Activated T-helper 1 cell treated with anti-CD3 and anti-CD28 coated beads, Interleukin-12 subunit alpha, Interleukin-12 subunit beta, Interleukin-2, Interleukin-4 antibody, amounts not matched to agents 30 ng/mL and 10 ng/mL and 1 ng/mL, durations not matched to agents 14 hours and 24 hours and 36 hours (primary cell): ENCODE measurements at regions of chr1 and their contacts with region 1.

Region 1: DNA sequence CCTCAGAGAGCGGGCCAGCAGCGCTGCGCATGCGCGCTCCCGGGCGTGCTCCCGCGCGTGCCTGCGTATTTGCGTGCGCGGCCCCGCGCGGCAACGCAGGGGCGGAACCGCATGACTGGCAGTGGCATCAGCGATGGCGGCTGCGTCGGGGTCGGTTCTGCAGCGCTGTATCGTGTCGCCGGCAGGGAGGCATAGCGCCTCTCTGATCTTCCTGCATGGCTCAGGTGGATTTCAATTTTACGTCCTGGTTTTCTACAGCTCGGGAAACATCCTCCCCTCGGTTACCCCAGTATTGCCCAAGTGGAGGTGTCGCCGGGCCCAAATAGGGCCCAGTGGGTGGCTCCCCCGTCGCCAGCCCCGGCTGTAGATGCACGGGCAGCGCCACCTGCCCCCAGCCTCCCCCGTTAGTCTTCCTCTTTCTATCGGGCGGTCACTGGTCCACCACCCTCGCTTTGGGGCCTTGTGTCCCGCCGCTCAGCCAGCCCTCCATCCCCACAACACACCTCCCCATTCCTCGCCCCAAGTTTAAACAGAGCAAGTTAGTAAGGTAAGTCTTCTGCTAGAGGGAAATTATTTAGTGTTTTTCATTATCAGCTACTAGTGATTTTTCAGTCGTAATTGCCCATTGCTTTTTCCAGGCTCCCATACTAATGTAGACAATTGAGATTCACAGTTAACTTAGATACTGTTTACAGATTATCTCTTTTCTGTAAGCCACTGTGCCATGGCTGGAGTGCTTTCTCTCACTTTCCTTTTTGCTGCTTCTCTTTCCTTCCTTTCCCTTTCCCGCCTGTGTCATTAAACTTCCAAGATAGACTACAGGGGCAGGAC is at the start of gene LYPLAL1:
- DNase-seq: peak; percentile 85
- H3K4me3 Mint-ChIP-seq: peak within 1 kb of the TSS; percentile 99
- H3K27ac Mint-ChIP-seq: peak within 1 kb of the TSS; percentile 97
- H3K4me1 Mint-ChIP-seq: peaks cover 51% of the 10 kb centered on the region
- H3K27me3 Mint-ChIP-seq: no peaks in the 10 kb centered on the region
- total RNA-seq, gene LYPLAL1: 18.4 and 19.1 TPM in 2 replicates

Region 2: GRCh38 chr1:217620814-217621213 is 1553.2 kb before region 1 on chr1:
- intact Hi-C with region 1: loop called (anchors 10 kb)
- DNase-seq: no peak
- H3K4me3 Mint-ChIP-seq: no peak overlapping the region
- H3K27ac Mint-ChIP-seq: no peak overlapping the region
- H3K4me1 Mint-ChIP-seq: peaks cover 12% of the 10 kb centered on the region
- H3K27me3 Mint-ChIP-seq: no peaks in the 10 kb centered on the region

Region 3: DNA sequence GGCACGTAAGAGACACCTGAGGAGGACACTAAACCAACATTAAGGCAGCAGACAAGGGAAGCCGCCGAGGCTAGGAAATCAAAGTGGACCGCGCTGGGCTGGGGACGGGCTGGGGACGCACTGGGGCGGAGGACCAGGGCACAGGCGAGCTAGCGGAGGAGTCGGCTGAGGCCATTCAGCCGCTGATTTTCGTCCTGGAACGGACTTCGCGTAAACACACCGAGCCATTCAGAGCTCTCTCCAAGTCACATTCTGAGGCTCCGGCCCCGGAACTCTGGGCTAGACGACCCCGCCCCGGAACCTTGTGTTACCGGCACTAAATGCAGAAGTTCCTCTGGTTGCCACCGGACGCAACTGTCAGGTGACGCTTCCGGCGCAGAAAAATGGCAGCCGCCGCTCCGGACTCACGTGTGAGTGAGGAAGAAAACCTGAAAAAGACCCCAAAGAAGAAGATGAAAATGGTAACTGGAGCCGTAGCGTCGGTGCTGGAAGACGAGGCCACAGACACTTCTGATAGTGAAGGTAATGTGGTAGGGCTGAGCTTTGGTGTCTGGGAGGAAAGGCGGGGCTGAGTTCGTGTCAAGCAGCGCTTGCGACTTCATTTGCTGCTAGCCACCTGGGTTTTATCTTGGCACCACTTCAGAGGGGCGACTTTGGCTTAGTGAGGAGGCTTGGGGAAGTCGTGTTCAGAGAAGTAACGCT is 888.9 kb before region 1 on chr1 and contains the start of gene RRP15:
- intact Hi-C with region 1: loop called (anchors 2 kb)
- DNase-seq: peak; percentile 82
- H3K4me3 Mint-ChIP-seq: peak within 1 kb of the TSS; percentile 95
- H3K27ac Mint-ChIP-seq: peak within 1 kb of the TSS; percentile 98
- H3K4me1 Mint-ChIP-seq: peaks cover 37% of the 10 kb centered on the region
- H3K27me3 Mint-ChIP-seq: peaks cover 6% of the 10 kb centered on the region
- total RNA-seq, gene RRP15: 42.2 and 50.1 TPM in 2 replicates

Region 4: DNA sequence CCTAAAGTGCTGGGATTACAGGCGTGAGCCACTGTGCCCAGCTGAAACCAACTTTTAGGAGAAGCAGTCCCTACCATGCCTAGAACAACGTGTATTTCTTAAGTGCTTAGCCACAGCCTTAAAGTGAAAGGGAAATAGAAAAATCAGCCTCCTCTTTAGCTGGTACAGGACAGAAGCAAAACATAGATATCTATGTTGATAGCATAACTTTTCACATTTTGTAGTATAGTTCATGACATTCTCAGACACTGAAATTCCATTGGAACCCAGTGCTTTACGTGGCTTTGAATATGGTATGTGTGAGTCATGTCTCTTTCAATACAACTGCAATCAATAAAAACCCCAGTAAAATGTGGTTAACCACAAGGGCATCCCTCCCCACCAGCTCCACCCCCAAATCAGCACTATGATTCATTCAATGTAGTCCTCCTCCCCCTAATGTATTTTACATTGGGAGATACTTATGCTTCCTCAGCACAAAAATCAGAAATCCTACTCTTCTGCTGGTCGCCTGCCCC is 796.8 kb before region 1 on chr1:
- intact Hi-C with region 1: loop called (anchors 2 kb)
- DNase-seq: peak; percentile 16
- H3K4me3 Mint-ChIP-seq: no peak overlapping the region
- H3K27ac Mint-ChIP-seq: peak overlapping the region; percentile 65
- H3K4me1 Mint-ChIP-seq: peaks cover 12% of the 10 kb centered on the region
- H3K27me3 Mint-ChIP-seq: peaks cover 27% of the 10 kb centered on the region

Region 5: DNA sequence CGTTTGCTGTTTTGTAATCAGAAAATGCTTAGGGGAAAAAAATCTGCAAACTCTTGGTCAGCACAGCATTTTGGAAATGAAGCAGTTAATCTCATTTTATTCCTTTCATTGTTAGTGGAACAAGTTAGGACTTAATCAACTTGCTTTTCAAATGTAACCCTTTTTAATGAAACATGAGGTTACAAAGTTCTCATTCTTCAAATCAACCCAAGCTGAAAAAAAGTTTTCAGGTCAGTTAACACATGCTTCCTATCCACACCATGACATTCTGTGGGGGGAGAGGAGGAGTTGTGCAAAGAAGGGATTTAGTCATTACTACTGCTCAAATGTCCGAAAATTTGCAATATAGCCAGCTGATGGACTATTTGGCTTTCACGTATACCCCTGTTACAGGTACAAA is 283.5 kb before region 1 on chr1:
- intact Hi-C with region 1: no loop called
- DNase-seq: no peak
- H3K4me3 Mint-ChIP-seq: no peak overlapping the region
- H3K27ac Mint-ChIP-seq: no peak overlapping the region
- H3K4me1 Mint-ChIP-seq: no peaks in the 10 kb centered on the region
- H3K27me3 Mint-ChIP-seq: no peaks in the 10 kb centered on the region

Region 6: DNA sequence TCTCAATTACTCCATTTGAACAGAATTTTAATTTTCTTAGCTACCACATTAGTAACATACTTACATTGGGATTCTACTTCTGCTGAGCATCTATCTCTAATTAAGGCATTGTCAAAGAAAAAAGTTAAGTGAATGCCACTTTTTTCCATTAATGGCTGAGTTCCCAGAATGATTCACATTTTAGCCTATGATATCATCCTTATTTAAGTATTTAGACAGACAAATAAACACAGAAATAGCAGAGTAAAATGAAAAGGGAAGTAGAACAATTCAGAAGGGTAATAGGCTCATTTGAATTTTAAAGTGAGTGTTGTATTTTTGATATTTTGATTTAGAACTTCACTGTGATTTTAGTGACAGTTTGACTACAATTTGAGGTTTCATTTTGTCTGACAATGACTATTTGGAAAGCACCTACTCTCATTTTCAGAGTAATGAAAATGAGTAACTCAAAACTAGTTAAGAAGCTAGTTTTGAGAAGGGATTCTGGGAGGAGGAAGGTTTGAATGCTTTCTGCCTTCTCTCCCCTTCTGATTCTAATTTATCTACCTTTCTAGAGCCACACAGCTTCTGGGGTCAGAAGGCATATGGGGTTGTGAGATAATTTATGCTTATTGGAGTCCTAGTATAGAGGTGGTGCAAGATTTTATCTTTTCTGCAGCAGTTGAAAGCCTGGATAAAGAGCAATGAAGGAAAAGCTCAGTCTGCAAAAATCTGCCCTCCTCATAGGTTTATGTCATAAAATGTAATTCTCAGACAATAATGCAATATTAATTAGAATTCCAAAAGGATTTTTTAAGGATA is 15.2 kb after region 1 on chr1:
- intact Hi-C with region 1: loop called (anchors 1 kb)
- DNase-seq: no peak
- H3K4me3 Mint-ChIP-seq: peak overlapping the region; percentile 22
- H3K27ac Mint-ChIP-seq: peak overlapping the region; percentile 48
- H3K4me1 Mint-ChIP-seq: peaks cover 28% of the 10 kb centered on the region
- H3K27me3 Mint-ChIP-seq: no peaks in the 10 kb centered on the region

Region 7: DNA sequence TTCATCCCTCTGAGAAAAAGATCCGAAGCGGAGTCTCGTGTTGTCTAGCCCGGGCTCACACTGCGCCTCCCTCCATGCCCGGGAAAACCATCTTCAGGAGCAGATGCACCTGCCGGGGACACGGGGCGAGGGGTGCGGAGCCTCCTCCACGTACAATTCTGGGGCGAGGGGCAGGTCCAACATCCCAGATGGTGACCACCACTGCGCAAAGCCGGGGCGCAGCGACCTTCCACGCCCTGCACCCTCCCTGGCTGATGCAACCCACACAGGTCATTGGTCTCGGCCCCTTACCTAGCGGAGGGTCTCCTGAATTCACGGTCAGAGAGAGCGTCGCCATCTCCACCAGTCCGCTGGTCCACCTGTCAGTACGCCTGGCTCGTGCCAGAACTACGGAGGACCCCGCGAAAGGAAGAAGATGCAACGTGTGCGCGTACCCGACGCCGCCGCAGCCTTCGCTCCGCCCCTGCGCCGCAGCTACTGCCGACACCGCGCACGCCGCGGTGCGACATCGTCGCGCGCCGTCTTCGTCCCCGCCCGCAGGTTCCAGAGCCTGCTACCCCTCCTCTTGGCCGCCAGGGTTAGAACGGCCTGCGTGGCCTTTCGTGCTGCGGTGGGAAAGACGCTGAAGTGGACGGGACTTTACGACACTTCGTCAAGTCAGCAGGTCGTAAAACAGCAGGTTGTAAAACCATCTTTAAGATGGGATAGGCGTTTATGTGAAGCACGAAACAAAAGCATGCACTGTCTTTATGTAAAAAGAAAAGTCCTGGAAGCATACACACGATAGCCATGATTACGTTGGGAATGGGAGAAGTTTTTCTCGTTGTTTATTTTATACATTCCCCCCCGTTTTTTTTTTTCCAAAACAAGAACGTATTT is 872.3 kb after region 1 on chr1 and contains the start of gene EPRS1:
- intact Hi-C with region 1: loop called (anchors 5 kb)
- DNase-seq: peak; percentile 95
- H3K4me3 Mint-ChIP-seq: peak within 1 kb of the TSS; percentile 96
- H3K27ac Mint-ChIP-seq: peak within 1 kb of the TSS; percentile 93
- H3K4me1 Mint-ChIP-seq: peaks cover 32% of the 10 kb centered on the region
- H3K27me3 Mint-ChIP-seq: no peaks in the 10 kb centered on the region
- total RNA-seq, gene EPRS1: 176 and 188 TPM in 2 replicates

Region 8: GRCh38 chr1:220272047-220272840 is 1098.3 kb after region 1 on chr1 and contains the start of gene RAB3GAP2:
- intact Hi-C with region 1: loop called (anchors 10 kb)
- DNase-seq: peak; percentile 97
- H3K4me3 Mint-ChIP-seq: no peak within 1 kb of the TSS
- H3K27ac Mint-ChIP-seq: no peak within 1 kb of the TSS
- H3K4me1 Mint-ChIP-seq: peaks cover 15% of the 10 kb centered on the region
- H3K27me3 Mint-ChIP-seq: peaks cover 9% of the 10 kb centered on the region
- total RNA-seq, gene RAB3GAP2: 51.4 and 56.8 TPM in 2 replicates